Panc1 (cell line): ENCODE measurements at regions of chr6 and their contacts with region 1.

Region 1: GRCh38 chr6:14178083-14178445 is 60.5 kb downstream of the CD83 start:
- DNase-seq: no peak
- ATAC-seq: no peak
- H3K4me3 ChIP-seq: no peak overlapping the region
- H3K27ac ChIP-seq: no peak overlapping the region
- H3K4me1 ChIP-seq: no peaks in the 10 kb centered on the region
- H3K27me3 ChIP-seq: peaks cover 6% of the 10 kb centered on the region; the same call in 1 of the 2 replicates
- CTCF ChIP-seq: no peak

Region 2: GRCh38 chr6:13272131-13273046 is 905.7 kb before region 1 on chr6:
- CTCF ChIA-PET with region 1: no interaction called
- POLR2A ChIA-PET with region 1: no interaction called
- in situ Hi-C with region 1: no loop called
- intact Hi-C with region 1: no loop called
- DNase-seq: no peak
- ATAC-seq: no peak
- H3K4me3 ChIP-seq: no peak overlapping the region
- H3K27ac ChIP-seq: no peak overlapping the region
- H3K4me1 ChIP-seq: no peaks in the 10 kb centered on the region
- H3K27me3 ChIP-seq: peaks cover 2% of the 10 kb centered on the region; the same call in 1 of the 2 replicates
- CTCF ChIP-seq: no peak

Region 3: DNA sequence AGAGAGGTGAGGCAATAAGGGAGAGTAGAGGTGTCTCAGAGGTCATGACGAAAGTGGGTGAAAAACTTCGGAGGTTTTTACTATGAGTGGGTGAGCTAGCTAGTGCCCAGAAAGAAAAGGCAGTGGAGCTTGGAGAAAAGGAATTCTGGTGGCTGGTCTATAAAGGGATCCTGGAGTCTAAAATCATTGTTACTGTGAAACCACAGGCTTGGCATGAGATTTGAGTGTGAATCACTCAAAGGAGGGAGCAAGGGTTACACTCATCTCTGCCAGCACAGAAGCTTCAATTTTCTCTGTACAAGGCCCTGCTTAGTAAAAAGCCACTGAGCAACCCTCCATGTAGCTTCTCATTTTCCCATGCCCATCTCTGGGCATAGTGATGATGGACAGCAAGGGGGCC is 13.0 kb before region 1 on chr6:
- CTCF ChIA-PET with region 1: no interaction called
- POLR2A ChIA-PET with region 1: interaction called, 12 read pairs
- in situ Hi-C with region 1: no loop called
- intact Hi-C with region 1: no loop called
- DNase-seq: no peak
- ATAC-seq: no peak
- H3K4me3 ChIP-seq: no peak overlapping the region
- H3K27ac ChIP-seq: no peak overlapping the region
- H3K4me1 ChIP-seq: no peaks in the 10 kb centered on the region
- H3K27me3 ChIP-seq: no peaks in the 10 kb centered on the region
- CTCF ChIP-seq: no peak